Heart left ventricle (tissue), 16 donors: ENCODE measurements at regions of chr2 and their contacts with region 1.

Region 1: DNA sequence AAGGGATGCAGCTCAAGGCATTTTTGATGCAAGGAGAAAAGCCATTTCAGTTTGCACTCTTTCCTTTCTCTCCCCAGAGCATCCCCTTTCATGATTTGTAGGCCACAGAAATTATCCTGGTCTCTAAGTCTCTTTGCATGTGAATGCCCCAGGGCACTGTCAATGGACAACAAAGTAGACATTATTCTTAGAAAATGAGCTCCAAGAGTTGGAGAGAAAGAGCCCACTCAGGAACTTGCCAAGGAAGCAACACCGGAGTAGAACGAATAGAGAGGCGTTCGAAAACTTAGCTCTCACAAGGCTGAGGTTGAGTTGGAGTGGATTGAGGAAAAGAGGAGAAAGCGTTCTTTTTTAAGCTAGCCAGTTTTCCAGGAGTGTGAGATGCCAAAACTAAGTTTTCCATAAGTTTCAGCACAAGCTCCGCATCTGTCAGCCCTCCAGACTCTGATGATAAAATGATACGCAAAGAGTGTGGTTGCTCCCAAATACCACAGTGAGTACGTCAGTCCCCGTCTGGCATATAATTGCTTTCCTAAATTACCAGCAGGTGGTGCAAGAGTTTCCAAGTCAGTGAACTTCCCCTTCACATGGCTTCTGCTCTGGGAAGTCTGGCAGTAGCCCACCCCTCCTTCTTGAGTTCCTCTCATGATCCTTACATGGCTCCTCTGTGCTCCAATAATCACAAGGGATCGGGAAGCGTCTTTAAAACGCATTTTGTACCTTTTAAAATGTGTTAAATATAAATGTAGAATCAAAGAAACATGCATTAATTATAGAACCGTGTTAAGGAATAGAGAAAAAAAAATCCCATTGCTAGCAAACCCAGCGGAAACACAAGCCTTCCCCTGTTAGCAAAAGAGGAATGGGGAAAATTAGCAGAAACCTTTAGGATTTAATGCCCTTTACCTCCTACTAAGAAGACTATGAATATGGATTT is 1060.6 kb upstream of the FANCL start:
- DNase-seq: peak in 3 of 5 donors; percentile 22 to 31 (median 29)
- ATAC-seq: peak; percentile 69 to 91 (median 74)
- H3K4me3 ChIP-seq: no peak overlapping the region
- H3K27ac ChIP-seq: no peak overlapping the region
- H3K4me1 ChIP-seq: peaks cover 0 to 6% (median 0%) of the 10 kb centered on the region in 12 donors
- H3K27me3 ChIP-seq: no peaks in the 10 kb centered on the region
- CTCF ChIP-seq: peak; percentile 32 to 73 (median 54)
- POLR2A ChIP-seq: no peak

Region 2: DNA sequence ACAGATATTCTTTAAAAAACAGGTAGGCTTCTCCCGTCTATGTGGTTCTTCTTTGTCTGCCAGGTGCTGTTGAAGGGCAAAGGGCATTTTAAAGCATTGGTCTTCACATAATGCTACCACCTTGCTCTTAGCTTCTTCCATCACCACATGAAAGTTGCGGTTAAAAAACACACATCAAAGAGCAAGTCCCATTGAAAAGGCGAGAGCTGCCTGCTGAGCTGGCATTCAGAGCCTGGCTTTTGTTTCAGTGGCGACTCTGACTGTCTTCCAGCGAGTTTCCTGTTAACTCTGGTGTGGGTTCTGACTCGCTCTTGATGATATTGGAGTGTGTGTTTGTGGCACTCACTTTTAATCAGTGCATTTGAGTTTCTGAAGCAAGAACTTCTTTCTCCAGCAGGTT is 435.7 kb before region 1 on chr2:
- intact Hi-C with region 1: no loop called
- DNase-seq: no peak
- ATAC-seq: no peak
- H3K4me3 ChIP-seq: no peak overlapping the region
- H3K27ac ChIP-seq: no peak overlapping the region
- H3K4me1 ChIP-seq: no peaks in the 10 kb centered on the region
- H3K27me3 ChIP-seq: no peaks in the 10 kb centered on the region
- CTCF ChIP-seq: no peak
- POLR2A ChIP-seq: no peak

Region 3: DNA sequence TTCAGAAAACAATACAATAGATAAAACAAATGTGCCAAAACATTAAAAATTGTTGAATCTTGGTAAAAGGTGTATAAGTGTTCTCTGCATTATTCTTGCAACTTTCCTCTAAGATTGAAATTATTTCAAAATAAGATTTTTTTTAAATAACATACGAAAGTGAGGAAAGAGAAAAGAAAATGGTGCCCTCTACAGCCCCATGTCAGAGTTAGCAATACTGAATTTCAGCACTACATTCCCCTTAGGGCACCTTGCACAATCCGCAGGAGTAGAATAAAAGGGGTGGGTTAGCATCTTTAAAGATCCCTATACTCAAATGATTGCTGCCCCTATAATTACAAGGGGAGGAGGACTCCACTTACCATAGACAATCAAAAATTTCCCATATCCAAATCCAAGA is 818.1 kb after region 1 on chr2:
- intact Hi-C with region 1: loop called in 4 of 10 experiments (anchors 10 kb)
- DNase-seq: no peak
- ATAC-seq: no peak
- H3K4me3 ChIP-seq: no peak overlapping the region
- H3K27ac ChIP-seq: no peak overlapping the region
- H3K4me1 ChIP-seq: no peaks in the 10 kb centered on the region
- H3K27me3 ChIP-seq: no peaks in the 10 kb centered on the region
- CTCF ChIP-seq: peak in 7 of 12 donors; percentile 15 to 44 (median 27)
- POLR2A ChIP-seq: no peak

Region 4: GRCh38 chr2:60152226-60152833 is 850.6 kb after region 1 on chr2:
- intact Hi-C with region 1: loop called in 1 of 10 experiments (anchors 10 kb)
- DNase-seq: no peak
- ATAC-seq: no peak
- H3K4me3 ChIP-seq: no peak overlapping the region
- H3K27ac ChIP-seq: no peak overlapping the region
- H3K4me1 ChIP-seq: no peaks in the 10 kb centered on the region
- H3K27me3 ChIP-seq: no peaks in the 10 kb centered on the region
- CTCF ChIP-seq: peak; percentile 33 to 74 (median 54)
- POLR2A ChIP-seq: no peak

Region 5: GRCh38 chr2:60317844-60318243 is 1016.1 kb after region 1 on chr2:
- intact Hi-C with region 1: loop called in 2 of 10 experiments (anchors 5 to 10 kb)
- DNase-seq: no peak
- ATAC-seq: peak; percentile 48 to 84 (median 76)
- H3K4me3 ChIP-seq: peak overlapping the region in 6 of 12 donors; percentile 1 to 30 (median 10)
- H3K27ac ChIP-seq: no peak overlapping the region
- H3K4me1 ChIP-seq: peaks cover 0 to 19% (median 0%) of the 10 kb centered on the region in 12 donors
- H3K27me3 ChIP-seq: peaks cover 0 to 5% (median 0%) of the 10 kb centered on the region in 9 donors
- CTCF ChIP-seq: no peak
- POLR2A ChIP-seq: no peak

Region 6: DNA sequence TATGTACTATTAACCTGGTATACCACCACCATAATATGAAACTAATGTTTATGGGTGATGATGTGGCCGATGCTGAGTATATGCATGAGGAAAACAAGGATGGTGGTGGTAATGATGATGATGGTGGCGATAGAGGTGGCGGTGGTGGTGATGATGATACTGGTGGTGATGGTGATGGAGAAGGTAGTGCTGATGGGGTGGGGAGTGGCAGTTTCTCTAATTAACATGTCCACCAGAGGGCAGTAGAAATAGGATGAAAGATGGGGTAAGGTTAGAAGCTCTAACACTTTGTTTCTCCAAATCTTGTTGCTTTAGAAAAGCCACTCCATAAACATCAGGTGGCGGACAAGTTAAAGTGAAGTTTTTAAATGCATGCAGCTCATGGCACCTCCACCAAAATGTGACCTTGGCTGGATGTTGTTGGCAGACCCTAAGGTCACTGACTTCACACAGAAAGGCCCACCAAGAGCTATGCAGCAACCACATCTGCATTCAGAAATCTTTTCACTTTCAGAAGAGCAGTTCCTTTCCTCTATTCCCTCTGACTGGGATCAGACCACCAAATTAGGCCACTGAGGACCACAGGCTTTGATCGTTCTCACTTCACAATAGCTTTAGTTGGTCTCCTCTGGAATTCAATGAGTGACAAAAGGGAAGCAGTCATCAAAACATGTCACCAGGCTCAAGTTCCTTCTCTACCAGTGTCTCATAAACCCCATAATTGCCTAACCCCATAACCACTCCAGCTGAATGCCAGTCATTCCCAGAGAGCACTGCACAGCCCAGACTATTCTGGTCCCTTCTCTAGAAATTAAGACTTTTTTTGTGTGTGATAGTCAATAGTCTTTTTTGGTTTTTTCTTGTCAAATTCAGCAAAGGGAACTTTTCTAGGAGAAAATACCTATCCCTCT is 1259.3 kb after region 1 on chr2:
- intact Hi-C with region 1: loop called in 5 of 10 experiments (anchors 10 kb)
- DNase-seq: no peak
- ATAC-seq: peak in 2 of 4 donors; percentile 50 to 64
- H3K4me3 ChIP-seq: no peak overlapping the region
- H3K27ac ChIP-seq: no peak overlapping the region
- H3K4me1 ChIP-seq: peaks cover 0 to 16% (median 0%) of the 10 kb centered on the region in 12 donors
- H3K27me3 ChIP-seq: peaks cover 0 to 77% (median 18%) of the 10 kb centered on the region in 9 donors
- CTCF ChIP-seq: peak; percentile 26 to 53 (median 37)
- POLR2A ChIP-seq: no peak

Region 7: DNA sequence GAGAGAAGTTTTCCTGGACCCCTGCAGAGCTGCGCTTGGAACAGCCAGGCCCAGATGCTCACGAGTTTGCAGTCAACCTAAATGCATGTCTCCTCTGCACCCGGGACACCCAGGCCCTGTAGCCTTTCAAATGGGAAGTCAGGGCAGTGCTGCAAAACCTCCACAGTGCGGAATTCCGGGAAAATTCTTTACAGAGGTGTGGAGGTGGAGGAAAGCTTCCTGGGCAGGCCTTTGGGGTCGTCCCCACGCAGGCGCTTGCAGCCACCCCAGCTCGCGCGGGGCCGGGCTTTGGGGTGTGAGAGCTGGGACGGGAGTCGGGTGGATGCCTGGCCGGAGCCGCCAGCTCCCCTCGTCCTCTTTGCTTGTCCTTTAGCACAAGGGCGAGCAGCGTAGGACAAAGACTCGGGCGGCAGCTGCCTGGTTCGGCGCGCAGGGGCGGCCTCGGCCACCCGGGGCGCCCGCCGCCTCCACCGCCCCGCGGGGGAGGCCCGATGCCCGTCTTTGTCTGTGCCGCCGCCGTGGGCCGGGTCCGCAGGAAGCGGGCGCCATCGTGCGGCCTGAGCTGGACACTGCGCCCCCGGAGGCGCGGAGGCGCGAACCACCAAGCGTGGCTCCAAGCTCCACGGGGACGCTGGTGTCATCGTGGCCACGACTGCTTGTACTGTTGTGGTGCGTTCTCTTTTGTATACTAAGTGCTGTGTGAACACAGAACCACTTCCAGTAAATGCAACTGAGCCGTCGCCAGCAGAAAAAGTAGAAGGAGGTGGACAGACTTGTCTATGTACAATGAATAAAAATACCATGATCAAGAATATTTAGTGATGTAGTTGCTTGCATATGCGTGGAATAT is 1279.9 kb after region 1 on chr2:
- intact Hi-C with region 1: loop called in 3 of 10 experiments (anchors 5 to 10 kb)
- DNase-seq: peak; percentile 46 to 87 (median 59)
- ATAC-seq: peak; percentile 15 to 96 (median 88)
- H3K4me3 ChIP-seq: peak overlapping the region in 11 of 12 donors; percentile 23 to 55 (median 45)
- H3K27ac ChIP-seq: no peak overlapping the region
- H3K4me1 ChIP-seq: peaks cover 0 to 8% (median 0%) of the 10 kb centered on the region in 12 donors
- H3K27me3 ChIP-seq: peaks cover 0 to 49% (median 17%) of the 10 kb centered on the region in 9 donors
- CTCF ChIP-seq: peak; percentile 76 to 97 (median 92)
- POLR2A ChIP-seq: no peak